Panc1 (cell line): ENCODE measurements at regions of chr5 and their contacts with region 1.

Region 1: GRCh38 chr5:4855048-4855447 is 285.1 kb upstream of the ADAMTS16 start:
- DNase-seq: no peak
- ATAC-seq: no peak
- H3K4me3 ChIP-seq: no peak overlapping the region
- H3K27ac ChIP-seq: no peak overlapping the region
- H3K4me1 ChIP-seq: no peaks in the 10 kb centered on the region
- H3K27me3 ChIP-seq: no peaks in the 10 kb centered on the region
- CTCF ChIP-seq: no peak

Region 2: GRCh38 chr5:3365501-3366215 is 1489.4 kb before region 1 on chr5:
- CTCF ChIA-PET with region 1: no interaction called
- POLR2A ChIA-PET with region 1: interaction called, 12 read pairs
- in situ Hi-C with region 1: no loop called
- intact Hi-C with region 1: no loop called
- DNase-seq: no peak
- ATAC-seq: no peak
- H3K4me3 ChIP-seq: no peak overlapping the region
- H3K27ac ChIP-seq: no peak overlapping the region
- H3K4me1 ChIP-seq: no peaks in the 10 kb centered on the region
- H3K27me3 ChIP-seq: no peaks in the 10 kb centered on the region
- CTCF ChIP-seq: no peak